PC-9 (cell line): ENCODE measurements at regions of chr7 and their contacts with region 1.

Region 1: GRCh38 chr7:124351950-124352349 is 319.1 kb upstream of the TMEM229A start:
- DNase-seq: no peak
- H3K4me3 ChIP-seq: no peak overlapping the region
- H3K27ac ChIP-seq: no peak overlapping the region
- H3K4me1 ChIP-seq: no peaks in the 10 kb centered on the region
- H3K27me3 ChIP-seq: no peaks in the 10 kb centered on the region
- CTCF ChIP-seq: no peak

Region 2: DNA sequence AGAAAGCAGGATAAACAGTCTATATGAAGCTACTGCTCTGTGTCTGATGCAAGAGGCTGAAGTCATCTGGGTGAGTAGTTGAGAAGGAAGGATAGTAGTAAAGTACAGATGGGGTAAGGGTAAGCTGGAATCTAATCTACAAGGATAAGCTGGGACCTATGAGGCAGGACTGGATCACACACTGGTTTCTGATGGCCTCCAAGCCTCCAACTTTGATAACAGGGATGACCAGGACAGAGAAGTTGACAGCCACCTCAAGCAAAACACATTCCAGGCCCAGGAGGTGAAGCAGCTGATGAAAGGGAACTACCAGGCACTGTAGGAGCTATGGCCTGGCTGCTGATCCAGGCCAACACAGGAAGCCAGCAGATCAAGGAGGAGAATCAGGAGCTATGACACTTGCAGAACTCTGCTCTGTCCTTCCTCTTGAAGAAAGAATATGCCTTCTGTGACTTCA is 41.0 kb before region 1 on chr7:
- CTCF ChIA-PET with region 1: no interaction called
- POLR2A ChIA-PET with region 1: no interaction called
- intact Hi-C with region 1: no loop called
- DNase-seq: no peak
- H3K4me3 ChIP-seq: no peak overlapping the region
- H3K27ac ChIP-seq: no peak overlapping the region
- H3K4me1 ChIP-seq: no peaks in the 10 kb centered on the region
- H3K27me3 ChIP-seq: no peaks in the 10 kb centered on the region
- CTCF ChIP-seq: no peak

Region 3: DNA sequence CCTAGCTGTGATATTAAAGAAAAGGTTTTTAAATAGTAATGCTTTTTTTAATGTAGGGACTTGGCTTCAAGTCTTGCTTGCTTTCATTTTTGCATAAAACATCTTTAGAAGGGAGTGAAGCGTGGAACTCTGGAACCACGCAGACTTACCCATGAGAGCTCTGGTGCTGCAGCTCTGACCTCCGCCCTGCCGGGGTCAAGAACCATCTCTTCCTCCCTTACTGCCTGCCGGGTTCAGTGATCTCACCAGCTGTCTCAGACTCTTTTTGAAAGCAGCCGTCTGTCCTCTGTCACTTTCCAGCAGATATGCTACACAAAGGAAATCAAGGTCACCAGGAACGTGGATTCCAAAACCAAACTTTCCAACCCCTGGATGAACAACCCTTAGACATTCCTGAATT is 59.8 kb after region 1 on chr7:
- CTCF ChIA-PET with region 1: no interaction called
- POLR2A ChIA-PET with region 1: interaction called, 11 read pairs
- intact Hi-C with region 1: no loop called
- DNase-seq: no peak
- H3K4me3 ChIP-seq: no peak overlapping the region
- H3K27ac ChIP-seq: no peak overlapping the region
- H3K4me1 ChIP-seq: no peaks in the 10 kb centered on the region
- H3K27me3 ChIP-seq: no peaks in the 10 kb centered on the region
- CTCF ChIP-seq: no peak